CD4-positive, alpha-beta memory T cell (primary cell): ENCODE measurements at regions of chr15 and their contacts with region 1.

Region 1: DNA sequence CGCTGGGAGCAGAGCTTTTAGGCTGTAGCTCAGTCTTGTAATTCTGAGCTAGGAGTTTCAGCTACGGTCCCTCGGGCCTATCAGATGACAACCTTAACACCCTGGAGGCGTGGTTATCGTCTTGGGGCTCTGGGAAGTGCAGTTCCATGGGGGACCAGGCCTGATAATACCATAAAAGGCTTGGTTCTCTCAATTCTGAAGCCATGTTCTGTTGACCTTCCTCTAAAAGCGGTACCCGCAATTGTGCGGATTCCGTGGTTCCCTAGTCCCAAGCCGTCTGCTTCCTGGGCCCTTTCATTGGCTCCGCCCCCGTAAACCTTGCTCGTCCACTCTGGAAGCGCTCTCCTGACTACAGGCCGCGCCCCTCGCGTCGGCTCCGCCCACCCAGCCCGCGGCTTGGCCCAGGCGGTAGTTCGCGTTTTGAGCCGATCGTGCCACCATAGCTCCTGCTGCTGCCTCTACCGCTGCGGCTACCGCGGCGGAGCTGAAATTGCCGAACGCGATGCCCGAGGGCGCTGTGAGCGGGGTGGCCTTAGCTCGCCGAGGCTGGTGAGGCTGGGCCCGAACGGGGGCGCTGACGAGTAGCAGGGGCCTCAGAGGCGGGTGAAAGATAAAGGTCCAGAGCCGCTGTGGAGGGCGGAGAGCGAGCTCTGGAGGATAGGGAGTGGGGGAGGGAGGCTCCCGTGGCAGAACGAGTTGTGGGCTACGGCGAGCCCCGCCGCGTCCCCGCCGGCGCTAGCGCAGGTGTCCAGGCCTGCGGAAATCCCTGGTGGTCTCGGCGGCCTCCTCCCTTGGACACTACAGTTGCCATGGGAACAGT is at the start of gene MAPKBP1:
- DNase-seq: peak; percentile 97 to 99 (median 98)
- H3K4me3 ChIP-seq: peak within 1 kb of the TSS; percentile 67 to 83
- H3K4me3 Mint-ChIP-seq: peak within 1 kb of the TSS; percentile 91 to 99 (median 96)
- H3K27ac ChIP-seq: peak within 1 kb of the TSS; percentile 75
- H3K27ac Mint-ChIP-seq: peak within 1 kb of the TSS; percentile 95 to 98 (median 97)
- H3K4me1 ChIP-seq: peaks cover 57% of the 10 kb centered on the region
- H3K4me1 Mint-ChIP-seq: peaks cover 46 to 65% (median 53%) of the 10 kb centered on the region in 4 donors
- H3K27me3 ChIP-seq: no peaks in the 10 kb centered on the region
- H3K27me3 Mint-ChIP-seq: no peaks in the 10 kb centered on the region
- total RNA-seq, gene MAPKBP1: 39.7 to 42.6 TPM

Region 2: DNA sequence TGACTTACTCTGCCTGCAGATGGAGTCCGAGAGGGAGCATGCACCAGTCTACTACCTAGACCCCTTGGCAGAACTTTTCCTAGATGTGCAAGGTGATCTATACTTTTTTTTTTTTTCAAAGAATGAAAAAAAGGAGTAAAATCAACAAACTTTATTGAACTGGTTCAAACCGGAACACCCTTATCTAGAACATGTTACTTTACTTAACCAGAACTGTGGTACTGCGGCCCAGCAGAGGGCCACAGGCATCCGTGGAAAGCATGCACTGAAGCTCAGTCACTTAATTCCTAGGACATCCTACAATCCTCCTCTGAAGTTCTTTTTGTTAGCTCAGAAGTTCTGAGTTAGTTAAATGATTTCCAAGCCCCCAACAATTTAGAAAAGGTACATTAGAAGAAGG is 799.4 kb before region 1 on chr15:
- CTCF ChIA-PET with region 1: no interaction called
- POLR2A ChIA-PET with region 1: no interaction called
- intact Hi-C with region 1: no loop called
- DNase-seq: no peak
- H3K4me3 ChIP-seq: no peak overlapping the region
- H3K4me3 Mint-ChIP-seq: no peak overlapping the region
- H3K27ac ChIP-seq: no peak overlapping the region
- H3K27ac Mint-ChIP-seq: peak overlapping the region in 1 of 7 donors; percentile 22
- H3K4me1 ChIP-seq: no peaks in the 10 kb centered on the region
- H3K4me1 Mint-ChIP-seq: no peaks in the 10 kb centered on the region
- H3K27me3 ChIP-seq: no peaks in the 10 kb centered on the region
- H3K27me3 Mint-ChIP-seq: no peaks in the 10 kb centered on the region

Region 3: DNA sequence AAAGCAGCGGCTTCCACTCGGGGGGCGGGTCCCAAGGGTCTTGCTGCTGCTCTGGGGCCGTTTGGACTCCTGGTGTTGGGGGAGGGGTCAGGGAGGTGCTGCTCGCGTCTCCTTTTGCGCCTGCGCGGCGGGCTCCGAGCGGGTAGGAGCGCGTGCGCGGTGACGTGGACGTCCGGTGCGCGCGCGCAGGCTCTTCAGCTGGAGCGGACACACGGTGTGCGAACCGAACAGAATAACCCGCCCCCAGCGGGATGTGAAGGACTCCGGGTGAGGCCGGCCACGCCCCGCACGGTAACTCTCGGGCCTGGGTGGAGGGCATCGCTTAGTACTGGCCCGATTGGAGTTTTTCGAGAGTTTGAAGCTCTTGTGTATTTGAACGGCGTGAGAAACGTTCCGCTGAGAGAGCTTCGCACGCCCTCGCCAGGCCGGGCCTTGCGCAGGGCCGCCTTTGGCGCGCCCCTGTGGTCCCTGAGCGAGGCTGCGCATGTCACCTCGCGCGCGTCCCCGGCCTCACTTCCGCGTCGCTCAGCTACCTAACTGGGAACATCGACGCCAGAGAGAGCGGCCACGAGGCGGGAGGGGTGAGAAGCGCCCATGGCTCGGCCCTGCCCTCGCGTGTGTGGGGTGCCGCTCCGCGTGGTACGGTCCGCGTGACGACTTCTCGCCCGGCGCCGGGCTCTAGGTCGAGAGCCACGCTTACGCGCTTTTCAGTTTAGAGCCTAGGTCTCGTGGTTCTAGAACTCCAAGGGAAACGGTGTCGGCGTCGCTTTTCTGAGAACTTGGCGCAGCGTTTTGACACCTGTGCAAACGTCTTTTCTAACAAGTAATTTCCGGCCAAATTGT is 113.8 kb before region 1 on chr15 and contains the start of gene MGA:
- CTCF ChIA-PET with region 1: interaction called, 14 read pairs
- POLR2A ChIA-PET with region 1: interaction called, 15 read pairs
- intact Hi-C with region 1: loop called (anchors 2 kb)
- DNase-seq: peak; percentile 90 to 94 (median 92)
- H3K4me3 ChIP-seq: peak within 1 kb of the TSS; percentile 71 to 72
- H3K4me3 Mint-ChIP-seq: peak within 1 kb of the TSS; percentile 84 to 96 (median 94)
- H3K27ac ChIP-seq: peak within 1 kb of the TSS; percentile 67
- H3K27ac Mint-ChIP-seq: peak within 1 kb of the TSS; percentile 91 to 99 (median 97)
- H3K4me1 ChIP-seq: peaks cover 59% of the 10 kb centered on the region
- H3K4me1 Mint-ChIP-seq: peaks cover 30 to 65% (median 43%) of the 10 kb centered on the region in 4 donors
- H3K27me3 ChIP-seq: no peaks in the 10 kb centered on the region
- H3K27me3 Mint-ChIP-seq: peaks cover 0 to 1% of the 10 kb centered on the region in 2 donors
- total RNA-seq, gene MGA: 70.1 to 74.9 TPM

Region 4: GRCh38 chr15:41811432-41812195 is 37.3 kb after region 1 on chr15:
- CTCF ChIA-PET with region 1: interaction called, 327 read pairs
- POLR2A ChIA-PET with region 1: interaction called, 56 read pairs
- intact Hi-C with region 1: loop called (anchors 1 kb)
- DNase-seq: peak; percentile 68 to 75 (median 70)
- H3K4me3 ChIP-seq: no peak overlapping the region
- H3K4me3 Mint-ChIP-seq: peak overlapping the region in 1 of 8 donors; percentile 1
- H3K27ac ChIP-seq: no peak overlapping the region
- H3K27ac Mint-ChIP-seq: peak overlapping the region in 4 of 7 donors; percentile 29 to 57 (median 37)
- H3K4me1 ChIP-seq: peaks cover 12% of the 10 kb centered on the region
- H3K4me1 Mint-ChIP-seq: peaks cover 7 to 21% (median 13%) of the 10 kb centered on the region in 4 donors
- H3K27me3 ChIP-seq: no peaks in the 10 kb centered on the region
- H3K27me3 Mint-ChIP-seq: no peaks in the 10 kb centered on the region

Region 5: DNA sequence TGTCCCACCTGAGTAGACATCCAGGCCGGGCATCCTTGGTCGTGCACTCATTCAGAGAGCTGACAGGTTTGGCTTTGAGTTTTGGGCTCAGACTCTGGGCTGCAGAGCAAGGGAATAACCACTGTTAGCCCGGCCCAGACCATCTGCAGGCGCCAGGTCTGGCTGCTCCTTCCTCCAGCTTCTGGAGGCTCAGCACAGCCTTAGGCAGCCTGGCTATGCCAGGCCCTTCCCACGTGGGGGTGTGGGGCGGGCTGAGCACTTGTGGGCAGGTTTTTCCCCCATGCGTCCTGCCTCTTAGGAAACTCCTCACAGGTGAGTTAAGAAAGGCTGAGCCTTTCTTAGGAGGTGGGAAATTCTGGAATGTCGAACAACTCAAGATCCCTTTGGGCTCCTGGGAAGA is 75.6 kb after region 1 on chr15:
- CTCF ChIA-PET with region 1: interaction called, 19 read pairs
- POLR2A ChIA-PET with region 1: no interaction called
- intact Hi-C with region 1: no loop called
- DNase-seq: no peak
- H3K4me3 ChIP-seq: no peak overlapping the region
- H3K4me3 Mint-ChIP-seq: no peak overlapping the region
- H3K27ac ChIP-seq: no peak overlapping the region
- H3K27ac Mint-ChIP-seq: peak overlapping the region in 4 of 7 donors; percentile 7 to 68 (median 36)
- H3K4me1 ChIP-seq: no peaks in the 10 kb centered on the region
- H3K4me1 Mint-ChIP-seq: peaks cover 0 to 2% (median 0%) of the 10 kb centered on the region in 4 donors
- H3K27me3 ChIP-seq: no peaks in the 10 kb centered on the region
- H3K27me3 Mint-ChIP-seq: no peaks in the 10 kb centered on the region

Region 6: DNA sequence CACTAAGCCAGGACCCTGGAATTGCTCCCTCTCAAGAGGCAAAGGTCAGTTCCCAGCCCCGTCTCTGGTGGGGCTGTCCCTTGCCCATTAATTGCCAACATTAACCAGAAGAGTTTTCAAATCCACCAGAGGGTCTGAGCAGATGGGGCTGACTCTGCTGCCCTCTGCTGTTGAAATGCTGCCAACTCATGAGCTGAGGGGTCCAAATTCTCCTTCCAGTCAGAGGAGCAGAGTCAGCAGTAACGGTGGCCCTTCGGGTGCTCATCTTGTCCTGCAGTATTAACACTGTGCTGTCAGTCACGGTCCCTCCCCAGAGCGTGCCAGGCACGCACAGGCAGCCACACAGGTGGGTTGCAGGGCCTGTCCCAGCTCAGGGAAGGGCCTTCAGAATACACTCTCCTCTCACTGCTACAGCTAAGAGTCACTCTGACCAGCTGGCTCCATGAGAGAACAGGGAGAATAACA is 130.3 kb after region 1 on chr15:
- CTCF ChIA-PET with region 1: interaction called, 287 read pairs
- POLR2A ChIA-PET with region 1: interaction called, 28 read pairs
- intact Hi-C with region 1: loop called (anchors 1 kb)
- DNase-seq: peak; percentile 68 to 76 (median 69)
- H3K4me3 ChIP-seq: no peak overlapping the region
- H3K4me3 Mint-ChIP-seq: no peak overlapping the region
- H3K27ac ChIP-seq: no peak overlapping the region
- H3K27ac Mint-ChIP-seq: peak overlapping the region in 6 of 7 donors; percentile 63 to 89 (median 80)
- H3K4me1 ChIP-seq: peaks cover 7% of the 10 kb centered on the region
- H3K4me1 Mint-ChIP-seq: peaks cover 6 to 13% (median 10%) of the 10 kb centered on the region in 4 donors
- H3K27me3 ChIP-seq: no peaks in the 10 kb centered on the region
- H3K27me3 Mint-ChIP-seq: no peaks in the 10 kb centered on the region

Region 7: DNA sequence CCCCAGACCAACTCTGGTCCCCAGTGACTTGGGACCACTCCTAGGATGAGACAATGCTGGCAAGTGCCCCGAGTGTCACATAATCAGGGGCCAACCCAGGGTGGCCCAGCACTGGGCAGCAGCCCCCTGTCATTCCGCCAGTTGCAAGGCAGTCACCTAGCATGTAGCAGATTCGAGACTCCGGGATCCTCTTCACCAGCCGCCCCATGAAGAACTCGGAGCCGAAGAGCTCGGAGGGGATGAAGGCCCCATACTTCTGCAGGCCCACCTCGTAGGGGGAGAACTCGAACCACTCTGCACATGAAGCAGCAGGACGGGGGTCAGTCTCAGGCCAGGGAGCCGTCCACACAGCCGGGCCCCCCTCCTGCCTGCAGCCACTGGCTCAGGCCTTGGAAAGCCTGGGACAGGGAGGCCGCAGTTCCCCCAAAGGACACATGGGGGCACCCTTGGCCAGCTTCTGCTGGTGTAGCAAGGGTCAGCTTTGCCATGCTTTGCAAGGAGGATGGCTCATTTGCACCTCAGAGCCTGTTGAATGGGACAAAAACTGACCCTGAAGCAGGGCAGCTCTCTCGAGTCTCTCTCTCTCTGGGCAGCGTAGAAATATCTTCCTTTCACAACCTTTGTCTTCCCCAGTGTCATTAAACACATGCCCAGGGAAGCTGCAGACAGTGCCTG is 215.1 kb after region 1 on chr15:
- CTCF ChIA-PET with region 1: interaction called, 10 read pairs
- POLR2A ChIA-PET with region 1: no interaction called
- intact Hi-C with region 1: no loop called
- DNase-seq: peak; percentile 70 to 78 (median 72)
- H3K4me3 ChIP-seq: no peak overlapping the region
- H3K4me3 Mint-ChIP-seq: no peak overlapping the region
- H3K27ac ChIP-seq: no peak overlapping the region
- H3K27ac Mint-ChIP-seq: peak overlapping the region in 1 of 7 donors; percentile 52
- H3K4me1 ChIP-seq: no peaks in the 10 kb centered on the region
- H3K4me1 Mint-ChIP-seq: no peaks in the 10 kb centered on the region
- H3K27me3 ChIP-seq: no peaks in the 10 kb centered on the region
- H3K27me3 Mint-ChIP-seq: no peaks in the 10 kb centered on the region